WTC11 (cell line): ENCODE measurements at regions of chr1 and their contacts with region 1.

Region 1: DNA sequence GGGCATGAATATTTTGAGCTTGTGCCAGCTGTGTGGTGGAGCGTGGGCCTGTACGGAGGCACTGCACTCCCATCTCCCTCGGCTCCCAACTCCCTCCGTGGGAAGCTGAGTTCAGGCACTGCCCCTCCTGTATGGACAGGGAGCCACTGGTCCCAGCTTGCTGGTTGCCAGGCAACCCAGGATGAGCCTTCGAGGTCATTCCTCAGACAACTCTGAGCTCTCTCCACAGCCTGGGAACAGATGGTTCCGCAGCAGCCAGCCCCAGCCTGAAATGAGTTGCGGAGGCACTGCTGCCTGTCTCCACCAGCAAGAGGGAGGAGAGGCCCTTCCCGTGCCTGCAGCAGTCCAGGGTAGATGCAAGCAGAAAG is 58.4 kb upstream of the TENT5B start:
- DNase-seq: peak; percentile 49
- ATAC-seq: peak; percentile 63
- H3K4me3 Mint-ChIP-seq: no peak overlapping the region
- H3K27ac Mint-ChIP-seq: no peak overlapping the region
- H3K4me1 Mint-ChIP-seq: peaks cover 15% of the 10 kb centered on the region
- H3K27me3 Mint-ChIP-seq: no peaks in the 10 kb centered on the region
- CTCF ChIP-seq: no peak

Region 2: GRCh38 chr1:27010989-27011764 is 59.9 kb before region 1 on chr1:
- CTCF ChIA-PET with region 1: interaction called, 11 read pairs
- POLR2A ChIA-PET with region 1: interaction called, 6 read pairs
- DNase-seq: peak; percentile 92
- ATAC-seq: peak; percentile 16
- H3K4me3 Mint-ChIP-seq: peak overlapping the region; percentile 88
- H3K27ac Mint-ChIP-seq: peak overlapping the region; percentile 92
- H3K4me1 Mint-ChIP-seq: peaks cover 57% of the 10 kb centered on the region
- H3K27me3 Mint-ChIP-seq: no peaks in the 10 kb centered on the region
- CTCF ChIP-seq: no peak

Region 3: DNA sequence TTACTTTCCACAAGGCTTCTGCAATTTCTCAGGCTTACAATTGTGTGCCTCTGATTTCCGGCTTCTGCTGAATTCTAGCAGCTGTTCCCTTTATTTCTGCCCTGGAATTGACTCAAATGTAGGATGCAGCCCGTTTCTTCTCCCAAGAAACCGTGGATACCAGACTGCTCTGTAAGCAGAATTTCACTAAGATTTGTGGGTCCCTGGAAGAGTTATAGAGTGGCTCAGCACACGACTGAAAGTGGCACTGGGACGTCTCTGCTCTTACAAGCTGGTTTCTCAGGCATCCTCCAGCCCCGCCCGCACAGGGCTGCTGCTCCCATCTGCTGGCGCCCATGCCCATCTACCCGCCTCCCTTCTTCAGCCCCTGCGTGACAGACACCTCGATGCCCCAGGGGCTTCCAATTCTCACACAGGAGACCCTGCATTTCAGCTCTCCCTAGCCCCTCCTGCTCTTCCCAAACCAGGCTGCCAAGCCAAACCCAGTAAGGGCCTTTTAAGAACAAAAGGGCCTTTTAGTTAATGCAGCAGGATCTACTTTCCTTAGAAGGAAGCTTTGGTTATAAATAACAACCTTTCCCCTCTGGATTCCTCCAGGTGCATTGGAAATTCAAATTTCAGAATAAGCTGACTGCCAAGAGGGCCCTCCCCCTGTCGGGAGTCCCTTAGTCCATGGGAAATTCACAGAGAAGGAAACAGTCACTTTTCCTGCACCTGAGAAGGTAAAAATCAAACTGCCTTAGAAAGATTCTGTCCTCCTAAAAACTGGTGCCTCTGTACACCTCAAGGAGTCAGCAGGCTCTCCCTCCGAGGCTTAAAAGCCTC is 13.0 kb before region 1 on chr1:
- CTCF ChIA-PET with region 1: interaction called, 34 read pairs
- POLR2A ChIA-PET with region 1: interaction called, 3 read pairs
- DNase-seq: peak; percentile 68
- ATAC-seq: peak; percentile 43
- H3K4me3 Mint-ChIP-seq: peak overlapping the region; percentile 61
- H3K27ac Mint-ChIP-seq: peak overlapping the region; percentile 98
- H3K4me1 Mint-ChIP-seq: peaks cover 45% of the 10 kb centered on the region
- H3K27me3 Mint-ChIP-seq: no peaks in the 10 kb centered on the region; the same call in 1 of the 2 replicates
- CTCF ChIP-seq: no peak

Region 4: DNA sequence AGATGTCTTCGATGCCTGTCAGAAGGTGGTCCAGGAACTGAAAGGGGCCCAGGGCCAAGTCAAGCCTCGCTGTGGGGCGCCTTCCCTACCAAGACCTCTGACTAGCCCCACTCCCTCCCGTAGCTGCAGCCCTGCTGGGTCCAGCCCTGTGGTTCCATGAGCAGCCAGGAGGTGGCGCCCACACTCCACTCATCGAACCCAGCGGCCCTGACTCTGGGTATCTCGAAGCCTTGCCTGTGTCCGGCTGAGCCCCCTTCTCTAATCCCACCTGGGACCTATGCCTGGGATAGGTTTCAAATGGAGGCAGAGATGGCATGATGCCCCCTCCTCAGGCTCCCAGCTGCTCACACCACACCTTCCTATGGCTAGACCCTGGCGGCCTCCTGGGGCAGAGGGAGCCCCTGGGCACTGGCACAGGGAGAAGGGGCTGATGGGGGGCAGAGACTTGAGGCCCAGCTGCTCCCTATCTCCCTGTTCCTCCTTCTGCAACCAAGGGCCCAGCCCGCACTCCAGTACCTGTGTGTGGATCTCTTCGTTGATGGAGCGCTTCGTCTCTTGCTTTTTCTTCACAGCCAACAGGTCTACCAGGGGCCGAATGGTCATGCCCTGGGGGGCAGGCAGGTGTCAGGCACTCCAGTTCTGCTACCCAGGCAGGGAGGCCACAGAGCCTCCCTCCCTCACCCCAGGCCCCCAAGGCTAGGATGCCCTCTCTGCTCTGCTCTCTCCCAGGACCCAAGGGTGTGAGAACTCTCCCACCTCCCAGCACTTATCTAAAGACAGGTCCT is 31.9 kb after region 1 on chr1:
- CTCF ChIA-PET with region 1: interaction called, 36 read pairs
- POLR2A ChIA-PET with region 1: no interaction called
- DNase-seq: peak; percentile 95
- ATAC-seq: peak; percentile 84
- H3K4me3 Mint-ChIP-seq: no peak overlapping the region
- H3K27ac Mint-ChIP-seq: no peak overlapping the region
- H3K4me1 Mint-ChIP-seq: peaks cover 29% of the 10 kb centered on the region
- H3K27me3 Mint-ChIP-seq: no peaks in the 10 kb centered on the region; the same call in 1 of the 2 replicates
- CTCF ChIP-seq: peak; percentile 99

Region 5: DNA sequence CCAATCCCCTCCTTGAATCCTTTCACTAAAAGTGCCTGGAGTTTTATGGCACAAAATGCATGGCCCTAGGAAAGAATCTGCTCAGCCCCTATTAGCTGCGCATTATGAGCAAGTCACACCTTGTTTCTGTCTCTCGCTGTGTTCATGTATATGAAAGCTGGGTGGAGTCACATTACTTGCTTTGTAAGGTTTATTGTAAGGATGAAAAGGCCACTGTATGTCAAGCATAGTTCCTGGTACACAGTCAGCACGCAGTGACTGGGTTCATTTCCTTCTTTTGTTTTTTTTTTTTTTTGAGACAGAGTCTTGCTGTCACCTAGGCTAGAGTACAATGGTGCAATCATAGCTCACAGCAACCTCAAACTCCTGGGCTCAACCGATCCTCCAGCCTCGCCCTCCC is 90.6 kb after region 1 on chr1:
- CTCF ChIA-PET with region 1: no interaction called
- POLR2A ChIA-PET with region 1: no interaction called
- DNase-seq: no peak
- ATAC-seq: no peak
- H3K4me3 Mint-ChIP-seq: no peak overlapping the region
- H3K27ac Mint-ChIP-seq: no peak overlapping the region
- H3K4me1 Mint-ChIP-seq: no peaks in the 10 kb centered on the region
- H3K27me3 Mint-ChIP-seq: no peaks in the 10 kb centered on the region
- CTCF ChIP-seq: no peak